Activated CD4-positive, alpha-beta memory T cell treated with anti-CD3 and anti-CD28 coated beads for 36 hours (primary cell): ENCODE measurements at regions of chr5 and their contacts with region 1.

Region 1: GRCh38 chr5:158074992-158075769 is 216.2 kb upstream of the CLINT1 start:
- DNase-seq: peak; percentile 61
- H3K4me3 Mint-ChIP-seq: no peak overlapping the region
- H3K27ac Mint-ChIP-seq: no peak overlapping the region
- H3K4me1 Mint-ChIP-seq: peaks cover 5% of the 10 kb centered on the region
- H3K27me3 Mint-ChIP-seq: peaks cover 6% of the 10 kb centered on the region

Region 2: GRCh38 chr5:157978061-157978460 is 97.1 kb before region 1 on chr5:
- CTCF ChIA-PET with region 1: no interaction called
- POLR2A ChIA-PET with region 1: no interaction called
- intact Hi-C with region 1: no loop called
- DNase-seq: no peak
- H3K4me3 Mint-ChIP-seq: no peak overlapping the region
- H3K27ac Mint-ChIP-seq: no peak overlapping the region
- H3K4me1 Mint-ChIP-seq: no peaks in the 10 kb centered on the region
- H3K27me3 Mint-ChIP-seq: peaks cover 3% of the 10 kb centered on the region

Region 3: DNA sequence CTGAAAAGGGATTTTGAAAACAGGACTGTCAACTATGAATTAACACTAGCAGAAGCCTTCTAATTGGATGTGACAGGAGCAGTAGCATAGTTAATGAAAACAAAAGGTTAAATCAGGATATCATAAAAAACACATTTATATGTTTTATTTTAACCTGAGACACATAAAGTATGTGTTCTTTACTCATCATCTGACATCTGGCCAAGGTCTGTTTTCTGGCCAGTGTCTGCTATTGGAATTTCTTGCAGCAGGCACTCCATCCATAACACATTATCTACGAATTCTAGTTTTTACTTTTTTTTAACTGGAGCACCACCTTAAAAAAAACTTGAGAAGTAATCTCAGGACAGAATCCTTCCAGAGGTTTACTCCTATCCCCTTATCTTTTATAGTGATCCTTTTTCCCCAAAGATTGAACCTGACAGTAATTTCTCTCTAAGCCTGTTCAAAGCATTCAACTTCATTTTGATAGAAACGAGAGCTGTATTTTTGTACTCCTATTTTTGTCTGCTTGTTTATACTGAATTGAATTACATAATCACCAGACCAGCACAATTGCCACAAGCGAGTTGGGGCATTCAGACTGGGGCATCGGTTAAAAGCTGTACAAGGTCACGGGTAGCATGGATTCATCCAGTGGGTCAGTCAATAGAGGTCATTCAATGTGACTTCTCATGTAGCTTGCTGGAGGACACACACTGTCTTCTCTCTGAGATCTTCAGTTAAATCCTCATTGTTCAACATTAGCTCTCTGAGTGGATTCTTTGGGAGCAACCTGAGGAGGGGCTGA is 10.7 kb before region 1 on chr5:
- CTCF ChIA-PET with region 1: interaction called, 25 read pairs
- POLR2A ChIA-PET with region 1: no interaction called
- intact Hi-C with region 1: no loop called
- DNase-seq: no peak
- H3K4me3 Mint-ChIP-seq: no peak overlapping the region
- H3K27ac Mint-ChIP-seq: no peak overlapping the region
- H3K4me1 Mint-ChIP-seq: no peaks in the 10 kb centered on the region
- H3K27me3 Mint-ChIP-seq: peaks cover 9% of the 10 kb centered on the region